H1 (cell line): ENCODE measurements at regions of chr16 and their contacts with region 1.

Region 1: GRCh38 chr16:535446-536405 is 8.2 kb downstream of the CAPN15 start:
- DNase-seq: no peak
- H3K4me3 ChIP-seq: no peak overlapping the region
- H3K27ac ChIP-seq: no peak overlapping the region
- H3K4me1 ChIP-seq: no peaks in the 10 kb centered on the region; a peak in 2 of 7 replicates
- H3K27me3 ChIP-seq: no peaks in the 10 kb centered on the region
- CTCF ChIP-seq: no peak
- EP300 ChIP-seq: no peak
- POLR2A ChIP-seq: no peak
- RAD21 ChIP-seq: no peak

Region 2: GRCh38 chr16:546909-547770 is 11.4 kb after region 1 on chr16:
- CTCF ChIA-PET with region 1: interaction called, 17 read pairs
- POLR2A ChIA-PET with region 1: interaction called, 6 read pairs
- DNase-seq: peak in 1 of 2 experiments; percentile 83
- H3K4me3 ChIP-seq: no peak overlapping the region
- H3K27ac ChIP-seq: no peak overlapping the region
- H3K4me1 ChIP-seq: no peaks in the 10 kb centered on the region
- H3K27me3 ChIP-seq: no peaks in the 10 kb centered on the region
- CTCF ChIP-seq: peak; percentile 48 to 68 (median 58)
- EP300 ChIP-seq: no peak
- POLR2A ChIP-seq: no peak
- RAD21 ChIP-seq: peak; percentile 42 to 49